Dendritic cell treated with granulocyte-macrophage colony-stimulating factor and Interleukin-4, amounts not matched to agents 40 ng/mL and 50 ng/mL, for 4 days (primary cell): ENCODE measurements at regions of chr1 and their contacts with region 1.

Region 1: GRCh38 chr1:179365320-179366092 is at the start of gene AXDND1:
- H3K4me3 Mint-ChIP-seq: peak within 1 kb of the TSS; percentile 80
- H3K27ac Mint-ChIP-seq: peak within 1 kb of the TSS; percentile 94
- H3K4me1 Mint-ChIP-seq: peaks cover 7% of the 10 kb centered on the region
- H3K27me3 Mint-ChIP-seq: no peaks in the 10 kb centered on the region

Region 2: GRCh38 chr1:178532392-178532791 is 833.1 kb before region 1 on chr1:
- intact Hi-C with region 1: loop called (anchors 5 kb)
- H3K4me3 Mint-ChIP-seq: no peak overlapping the region
- H3K27ac Mint-ChIP-seq: no peak overlapping the region
- H3K4me1 Mint-ChIP-seq: no peaks in the 10 kb centered on the region
- H3K27me3 Mint-ChIP-seq: no peaks in the 10 kb centered on the region

Region 3: DNA sequence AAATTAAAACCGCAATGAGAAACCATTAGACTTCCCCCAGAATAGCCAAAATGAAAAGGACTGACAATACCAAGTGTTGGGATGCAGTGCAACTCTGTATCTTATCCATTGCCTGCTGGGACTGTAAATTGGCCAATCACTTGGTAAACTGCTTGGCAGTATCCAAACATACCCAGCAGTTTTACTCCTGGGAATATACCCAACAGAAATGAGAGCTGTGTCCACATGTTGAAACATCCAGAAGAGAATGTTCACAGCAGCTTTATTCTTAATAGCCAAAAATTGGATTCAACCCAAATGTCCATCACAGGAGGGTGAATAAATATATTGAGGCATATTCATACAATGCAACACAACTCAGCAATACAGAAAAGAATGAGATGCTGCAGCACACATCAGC is 353.5 kb before region 1 on chr1:
- intact Hi-C with region 1: no loop called
- H3K4me3 Mint-ChIP-seq: no peak overlapping the region
- H3K27ac Mint-ChIP-seq: no peak overlapping the region
- H3K4me1 Mint-ChIP-seq: peaks cover 24% of the 10 kb centered on the region
- H3K27me3 Mint-ChIP-seq: no peaks in the 10 kb centered on the region

Region 4: GRCh38 chr1:179025125-179025974 is 340.2 kb before region 1 on chr1 and contains the start of gene FAM20B:
- intact Hi-C with region 1: loop called (anchors 5 kb)
- H3K4me3 Mint-ChIP-seq: peak within 1 kb of the TSS; percentile 83
- H3K27ac Mint-ChIP-seq: peak within 1 kb of the TSS; percentile 84
- H3K4me1 Mint-ChIP-seq: peaks cover 63% of the 10 kb centered on the region
- H3K27me3 Mint-ChIP-seq: peaks cover 1% of the 10 kb centered on the region

Region 5: GRCh38 chr1:179081687-179082332 is 283.7 kb before region 1 on chr1 and contains the start of gene TOR3A:
- intact Hi-C with region 1: loop called (anchors 1 kb)
- H3K4me3 Mint-ChIP-seq: peak within 1 kb of the TSS; percentile 92
- H3K27ac Mint-ChIP-seq: peak within 1 kb of the TSS; percentile 89
- H3K4me1 Mint-ChIP-seq: peaks cover 41% of the 10 kb centered on the region
- H3K27me3 Mint-ChIP-seq: no peaks in the 10 kb centered on the region

Region 6: GRCh38 chr1:179229214-179230140 is 136.0 kb before region 1 on chr1 and contains the start of gene ABL2:
- intact Hi-C with region 1: loop called (anchors 10 kb)
- H3K4me3 Mint-ChIP-seq: peak within 1 kb of the TSS; percentile 99
- H3K27ac Mint-ChIP-seq: peak within 1 kb of the TSS; percentile 86
- H3K4me1 Mint-ChIP-seq: peaks cover 53% of the 10 kb centered on the region
- H3K27me3 Mint-ChIP-seq: no peaks in the 10 kb centered on the region

Region 7: GRCh38 chr1:179251675-179252074 is 113.8 kb before region 1 on chr1:
- intact Hi-C with region 1: loop called (anchors 2 kb)
- H3K4me3 Mint-ChIP-seq: no peak overlapping the region
- H3K27ac Mint-ChIP-seq: no peak overlapping the region
- H3K4me1 Mint-ChIP-seq: peaks cover 25% of the 10 kb centered on the region
- H3K27me3 Mint-ChIP-seq: no peaks in the 10 kb centered on the region

Region 8: GRCh38 chr1:179293340-179294327 is 71.9 kb before region 1 on chr1 and contains the start of gene SOAT1:
- intact Hi-C with region 1: loop called (anchors 1 kb)
- H3K4me3 Mint-ChIP-seq: peak within 1 kb of the TSS; percentile 82
- H3K27ac Mint-ChIP-seq: peak within 1 kb of the TSS; percentile 80
- H3K4me1 Mint-ChIP-seq: peaks cover 68% of the 10 kb centered on the region
- H3K27me3 Mint-ChIP-seq: no peaks in the 10 kb centered on the region

Region 9: GRCh38 chr1:179353546-179353945 is 12.0 kb before region 1 on chr1:
- intact Hi-C with region 1: no loop called
- H3K4me3 Mint-ChIP-seq: no peak overlapping the region
- H3K27ac Mint-ChIP-seq: no peak overlapping the region
- H3K4me1 Mint-ChIP-seq: peaks cover 5% of the 10 kb centered on the region
- H3K27me3 Mint-ChIP-seq: no peaks in the 10 kb centered on the region